AG04449 (cell line): ENCODE measurements at regions of chr3 and their contacts with region 1.

Region 1: DNA sequence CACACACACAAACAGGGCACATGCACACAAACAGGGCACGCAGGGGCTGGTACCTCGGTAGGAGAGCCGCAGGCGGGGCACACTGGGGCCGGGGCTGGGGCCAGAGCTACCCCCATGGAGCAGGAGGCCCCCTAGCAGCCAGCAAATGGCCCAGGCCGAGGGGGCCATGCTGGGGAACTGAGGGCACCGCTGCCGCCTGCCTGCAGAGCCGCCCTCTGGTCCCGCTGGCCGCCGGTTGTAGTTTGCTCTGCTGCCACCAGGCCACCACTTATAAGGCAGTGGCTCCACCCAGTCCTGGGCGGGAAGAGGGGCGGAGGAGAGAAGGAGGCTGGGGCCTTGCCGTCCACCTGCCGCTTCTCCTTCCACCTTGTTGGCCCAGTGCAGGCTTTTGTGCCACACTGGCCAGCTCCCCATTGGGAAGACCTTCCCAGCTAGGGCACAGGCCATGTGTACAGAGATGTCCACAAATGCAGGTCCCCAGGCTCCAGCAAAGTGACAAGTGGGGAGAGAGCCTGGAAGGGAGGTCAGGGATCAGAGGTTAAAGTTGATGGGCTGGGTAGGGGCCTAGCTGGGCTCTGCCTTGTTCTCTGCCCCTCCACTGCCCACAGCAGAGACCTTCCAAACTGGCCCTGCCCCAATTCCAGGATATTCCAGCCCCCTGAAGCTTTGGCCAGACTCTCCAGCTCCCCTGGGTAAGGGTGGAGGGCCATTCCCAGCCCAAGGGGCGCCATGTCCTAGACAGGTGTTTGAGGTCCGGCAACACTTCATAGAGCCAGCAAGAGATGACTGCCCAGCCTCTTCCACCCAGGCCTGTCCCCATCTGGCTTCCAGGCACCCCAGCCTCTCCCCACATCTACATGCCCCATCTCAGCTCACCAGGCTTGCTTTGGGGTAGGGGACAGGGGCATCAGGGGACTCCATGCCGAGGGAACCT is at the start of gene SEMA3G:
- DNase-seq: no peak
- H3K4me3 ChIP-seq: no peak within 1 kb of the TSS
- CTCF ChIP-seq: peak; percentile 76

Region 2: GRCh38 chr3:52406231-52406661 is 38.9 kb before region 1 on chr3:
- CTCF ChIA-PET with region 1: interaction called, 12 read pairs
- POLR2A ChIA-PET with region 1: interaction called, 3 read pairs
- DNase-seq: no peak
- H3K4me3 ChIP-seq: no peak overlapping the region
- CTCF ChIP-seq: no peak

Region 3: DNA sequence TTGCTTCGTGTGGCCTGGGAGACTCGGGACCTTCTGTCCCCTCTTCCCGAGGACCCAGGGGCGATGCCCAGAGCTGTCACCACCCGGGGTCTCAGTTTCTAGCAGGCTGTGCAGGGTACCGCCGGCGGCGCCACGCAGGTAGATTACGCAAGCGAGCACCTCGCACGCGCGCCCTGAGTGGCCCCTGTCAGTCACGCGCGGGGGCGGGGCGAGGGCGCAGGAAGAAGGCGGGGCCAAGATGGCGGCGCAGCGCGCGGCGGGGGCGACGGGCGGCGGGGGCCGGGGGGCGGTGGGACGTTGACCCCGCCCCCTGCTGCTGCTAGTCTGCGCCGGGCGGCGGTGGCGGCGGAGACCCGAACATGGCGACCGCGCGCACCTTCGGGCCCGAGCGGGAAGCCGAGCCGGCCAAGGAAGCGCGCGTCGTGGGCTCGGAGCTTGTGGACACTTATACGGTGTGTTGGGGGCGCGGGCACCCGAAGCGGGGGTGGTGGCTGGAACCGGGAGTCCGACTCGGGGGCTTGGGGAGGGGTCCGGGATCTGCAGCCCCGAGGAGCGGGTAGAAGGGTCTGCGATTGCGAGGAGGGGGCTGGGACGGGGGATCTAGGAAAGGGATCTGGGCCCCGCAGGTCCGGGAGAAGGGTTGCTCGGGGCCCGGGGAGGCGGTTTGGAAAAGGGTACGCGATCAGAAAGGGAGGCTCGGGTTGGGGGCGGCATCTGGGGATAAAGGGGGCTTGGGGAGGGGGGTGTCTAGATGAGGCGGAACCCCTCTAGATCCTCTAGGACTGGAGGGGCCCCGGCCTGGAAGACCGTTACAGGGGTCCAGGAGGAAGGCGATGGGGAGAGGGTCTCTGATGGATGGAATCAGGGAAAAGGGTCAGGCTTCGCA is 10.4 kb after region 1 on chr3 and contains the start of gene NISCH:
- CTCF ChIA-PET with region 1: interaction called, 53 read pairs
- POLR2A ChIA-PET with region 1: interaction called, 3 read pairs
- DNase-seq: no peak
- H3K4me3 ChIP-seq: peak within 1 kb of the TSS; percentile 84
- CTCF ChIP-seq: no peak

Region 4: DNA sequence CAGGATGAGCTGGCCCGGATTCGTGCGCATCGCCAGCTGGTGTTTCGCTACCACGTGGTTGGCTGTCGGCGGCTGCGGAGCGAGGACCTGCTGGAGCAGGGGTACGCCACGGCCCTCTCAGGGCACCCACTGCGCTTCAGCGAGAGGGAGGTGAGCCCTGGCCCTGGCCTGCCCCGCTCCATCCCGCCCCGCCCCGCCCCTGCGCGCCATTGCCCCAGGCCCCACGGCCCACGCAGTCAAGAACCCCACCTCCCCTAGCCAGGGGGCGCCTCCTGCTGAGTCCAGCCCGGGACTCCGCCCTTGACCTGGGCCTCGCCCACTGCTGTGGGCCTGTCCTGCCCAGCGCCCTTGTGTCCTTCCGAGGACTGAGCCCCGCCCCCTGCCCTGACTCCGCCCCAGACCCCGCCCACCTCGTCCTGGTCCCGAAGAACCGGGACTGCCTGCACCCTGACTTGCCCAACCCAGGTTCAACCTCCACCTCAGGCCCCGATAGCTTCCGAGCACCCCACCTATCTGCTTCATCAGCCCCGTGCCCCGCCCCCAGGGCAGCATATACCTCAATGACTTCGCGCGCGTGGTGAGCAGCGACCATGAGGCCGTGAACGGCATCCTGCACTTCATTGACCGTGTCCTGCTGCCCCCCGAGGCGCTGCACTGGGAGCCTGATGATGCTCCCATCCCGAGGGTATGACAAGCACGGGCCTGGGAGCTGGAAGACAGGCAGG is 73.8 kb after region 1 on chr3:
- CTCF ChIA-PET with region 1: no interaction called
- POLR2A ChIA-PET with region 1: no interaction called
- DNase-seq: no peak
- H3K4me3 ChIP-seq: peak overlapping the region; percentile 43
- CTCF ChIP-seq: no peak

Region 5: DNA sequence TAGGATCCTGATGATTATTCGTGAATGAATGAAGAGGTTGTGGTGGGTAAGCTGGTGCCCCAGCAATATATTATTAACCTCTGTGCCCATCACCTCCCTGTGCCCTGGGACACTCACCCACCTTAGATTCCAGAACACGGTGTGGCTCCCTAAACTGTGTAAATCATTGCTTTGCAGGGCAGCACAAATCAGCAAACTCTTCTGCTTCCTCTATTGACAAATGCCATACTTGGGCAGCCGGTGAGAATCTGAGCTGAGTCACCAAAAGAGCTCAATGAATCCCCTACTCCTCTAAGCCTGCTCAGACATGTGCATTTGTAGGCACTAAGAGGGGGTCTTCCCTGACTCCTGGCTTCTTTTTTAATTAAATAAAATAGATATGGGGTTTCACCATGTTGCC is 107.0 kb after region 1 on chr3:
- CTCF ChIA-PET with region 1: no interaction called
- POLR2A ChIA-PET with region 1: no interaction called
- DNase-seq: no peak
- H3K4me3 ChIP-seq: no peak overlapping the region
- CTCF ChIP-seq: no peak